Activated B cell treated with CpG ODN at 0.5 μM for 24 hours (primary cell): ENCODE measurements at regions of chr3 and their contacts with region 1.

Region 1: GRCh38 chr3:179653096-179653797 is 407 bp downstream of the USP13 start:
- DNase-seq: peak; percentile 66
- ATAC-seq: peak; percentile 38
- H3K4me3 Mint-ChIP-seq: peak overlapping the region; percentile 91
- H3K27ac Mint-ChIP-seq: peak overlapping the region; percentile 87
- H3K4me1 Mint-ChIP-seq: peaks cover 25% of the 10 kb centered on the region
- H3K27me3 Mint-ChIP-seq: no peaks in the 10 kb centered on the region
- CTCF ChIP-seq: no peak

Region 2: GRCh38 chr3:179071550-179072397 is 581.5 kb before region 1 on chr3 and contains the start of gene ZMAT3:
- CTCF ChIA-PET with region 1: no interaction called
- POLR2A ChIA-PET with region 1: no interaction called
- intact Hi-C with region 1: loop called (anchors 5 kb)
- DNase-seq: peak; percentile 82
- ATAC-seq: peak; percentile 74
- H3K4me3 Mint-ChIP-seq: peak within 1 kb of the TSS; percentile 96
- H3K27ac Mint-ChIP-seq: peak within 1 kb of the TSS; percentile 91
- H3K4me1 Mint-ChIP-seq: peaks cover 60% of the 10 kb centered on the region
- H3K27me3 Mint-ChIP-seq: no peaks in the 10 kb centered on the region
- CTCF ChIP-seq: no peak
- total RNA-seq, gene ZMAT3: 29.8 and 32.0 TPM in 2 replicates

Region 3: GRCh38 chr3:179330438-179330837 is 322.8 kb before region 1 on chr3:
- CTCF ChIA-PET with region 1: no interaction called
- POLR2A ChIA-PET with region 1: no interaction called
- intact Hi-C with region 1: no loop called
- DNase-seq: no peak
- ATAC-seq: no peak
- H3K4me3 Mint-ChIP-seq: no peak overlapping the region
- H3K27ac Mint-ChIP-seq: no peak overlapping the region
- H3K4me1 Mint-ChIP-seq: peaks cover 4% of the 10 kb centered on the region
- H3K27me3 Mint-ChIP-seq: no peaks in the 10 kb centered on the region
- CTCF ChIP-seq: no peak

Region 4: DNA sequence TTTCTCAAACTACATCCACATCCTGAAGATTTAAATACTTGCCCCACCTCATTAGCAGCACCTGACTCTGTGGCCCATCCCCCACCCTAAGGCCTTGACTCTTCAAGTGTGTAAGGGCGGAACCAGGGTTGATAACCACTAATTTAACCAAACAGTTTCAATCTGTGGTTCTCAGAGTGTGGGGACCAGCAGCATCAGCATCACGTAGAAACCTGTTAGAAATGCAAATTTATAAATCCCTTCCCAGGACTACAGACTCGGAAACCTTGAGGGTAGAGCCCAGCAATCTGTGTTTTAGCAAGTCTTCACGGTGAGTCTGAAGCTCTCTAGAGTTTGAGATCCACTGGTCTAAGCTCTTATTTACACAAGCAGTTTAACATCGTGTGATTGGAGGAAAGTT is 214.4 kb before region 1 on chr3:
- CTCF ChIA-PET with region 1: no interaction called
- POLR2A ChIA-PET with region 1: no interaction called
- intact Hi-C with region 1: loop called (anchors 5 kb)
- DNase-seq: peak; percentile 41
- ATAC-seq: peak; percentile 96
- H3K4me3 Mint-ChIP-seq: peak overlapping the region; percentile 71
- H3K27ac Mint-ChIP-seq: peak overlapping the region; percentile 92
- H3K4me1 Mint-ChIP-seq: peaks cover 51% of the 10 kb centered on the region
- H3K27me3 Mint-ChIP-seq: no peaks in the 10 kb centered on the region
- CTCF ChIP-seq: no peak

Region 5: GRCh38 chr3:179451265-179452175 is 201.7 kb before region 1 on chr3 and contains the start of gene GNB4:
- CTCF ChIA-PET with region 1: no interaction called
- POLR2A ChIA-PET with region 1: interaction called, 3 read pairs
- intact Hi-C with region 1: loop called (anchors 5 kb)
- DNase-seq: peak; percentile 74
- ATAC-seq: peak; percentile 88
- H3K4me3 Mint-ChIP-seq: peak within 1 kb of the TSS; percentile 92
- H3K27ac Mint-ChIP-seq: peak within 1 kb of the TSS; percentile 93
- H3K4me1 Mint-ChIP-seq: peaks cover 35% of the 10 kb centered on the region
- H3K27me3 Mint-ChIP-seq: no peaks in the 10 kb centered on the region
- CTCF ChIP-seq: no peak
- total RNA-seq, gene GNB4: 18.0 and 22.7 TPM in 2 replicates

Region 6: GRCh38 chr3:180601688-180602666 is 948.7 kb after region 1 on chr3 and contains the start of gene TTC14:
- CTCF ChIA-PET with region 1: no interaction called
- POLR2A ChIA-PET with region 1: interaction called, 3 read pairs
- intact Hi-C with region 1: loop called (anchors 1 kb)
- DNase-seq: peak; percentile 81
- ATAC-seq: peak; percentile 91
- H3K4me3 Mint-ChIP-seq: peak within 1 kb of the TSS; percentile 97
- H3K27ac Mint-ChIP-seq: peak within 1 kb of the TSS; percentile 95
- H3K4me1 Mint-ChIP-seq: peaks cover 22% of the 10 kb centered on the region
- H3K27me3 Mint-ChIP-seq: peaks cover 5% of the 10 kb centered on the region
- CTCF ChIP-seq: no peak
- total RNA-seq, gene TTC14: 81.5 and 82.2 TPM in 2 replicates

Region 7: DNA sequence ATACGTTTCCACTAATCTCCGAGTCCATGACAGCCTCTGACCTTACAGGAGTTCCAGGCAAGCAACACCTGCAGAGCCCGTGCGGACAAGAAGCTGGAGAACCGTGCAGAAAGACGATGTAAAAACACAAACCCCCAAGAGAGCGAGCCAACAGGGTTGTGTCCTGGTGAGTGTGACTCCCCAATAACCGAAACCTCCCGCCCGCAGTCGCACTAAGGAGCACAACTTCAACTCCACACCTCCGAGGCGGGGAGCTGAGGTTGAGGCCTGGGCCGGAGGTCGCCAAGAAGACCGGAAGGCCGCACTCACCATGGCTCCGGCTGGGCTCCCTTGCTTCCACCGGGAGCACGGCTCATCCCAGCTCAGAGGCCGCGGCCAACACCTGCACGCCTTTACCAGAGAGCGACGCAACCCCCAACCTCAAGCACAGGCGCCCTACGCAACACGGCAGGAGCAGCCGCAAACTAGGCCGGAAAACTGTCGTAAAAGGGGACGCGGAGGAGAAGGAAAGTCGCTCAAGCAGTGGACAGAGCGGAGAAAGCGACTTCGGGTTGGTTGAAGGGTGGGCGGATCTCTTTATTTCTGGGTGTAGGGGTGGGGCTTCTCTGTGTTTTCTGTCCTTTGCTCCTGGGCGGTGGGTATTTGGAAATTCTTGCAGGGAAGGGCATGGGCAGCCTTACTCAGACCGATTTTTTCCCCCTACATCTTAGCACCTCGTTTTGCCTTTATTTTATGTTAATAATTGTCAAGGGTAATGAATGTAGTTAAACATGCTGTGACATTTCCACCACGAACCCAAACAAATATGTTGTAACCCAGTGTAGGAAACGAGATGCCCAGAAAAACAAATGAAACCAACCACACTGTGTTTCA is 1336.3 kb after region 1 on chr3 and contains the start of gene DNAJC19:
- CTCF ChIA-PET with region 1: no interaction called
- POLR2A ChIA-PET with region 1: no interaction called
- intact Hi-C with region 1: loop called (anchors 5 kb)
- DNase-seq: peak; percentile 77
- ATAC-seq: peak; percentile 97
- H3K4me3 Mint-ChIP-seq: peak within 1 kb of the TSS; percentile 98
- H3K27ac Mint-ChIP-seq: peak within 1 kb of the TSS; percentile 92
- H3K4me1 Mint-ChIP-seq: peaks cover 32% of the 10 kb centered on the region
- H3K27me3 Mint-ChIP-seq: peaks cover 7% of the 10 kb centered on the region
- CTCF ChIP-seq: no peak
- total RNA-seq, gene DNAJC19: 40.3 and 53.1 TPM in 2 replicates

Region 8: GRCh38 chr3:181278468-181279238 is 1625.4 kb after region 1 on chr3:
- CTCF ChIA-PET with region 1: no interaction called
- POLR2A ChIA-PET with region 1: no interaction called
- intact Hi-C with region 1: loop called (anchors 5 kb)
- DNase-seq: no peak
- ATAC-seq: no peak
- H3K4me3 Mint-ChIP-seq: no peak overlapping the region
- H3K27ac Mint-ChIP-seq: no peak overlapping the region
- H3K4me1 Mint-ChIP-seq: no peaks in the 10 kb centered on the region
- H3K27me3 Mint-ChIP-seq: peaks cover 2% of the 10 kb centered on the region
- CTCF ChIP-seq: no peak